Endothelial cell of umbilical vein (primary cell): ENCODE measurements at regions of chr3 and their contacts with region 1.

Region 1: DNA sequence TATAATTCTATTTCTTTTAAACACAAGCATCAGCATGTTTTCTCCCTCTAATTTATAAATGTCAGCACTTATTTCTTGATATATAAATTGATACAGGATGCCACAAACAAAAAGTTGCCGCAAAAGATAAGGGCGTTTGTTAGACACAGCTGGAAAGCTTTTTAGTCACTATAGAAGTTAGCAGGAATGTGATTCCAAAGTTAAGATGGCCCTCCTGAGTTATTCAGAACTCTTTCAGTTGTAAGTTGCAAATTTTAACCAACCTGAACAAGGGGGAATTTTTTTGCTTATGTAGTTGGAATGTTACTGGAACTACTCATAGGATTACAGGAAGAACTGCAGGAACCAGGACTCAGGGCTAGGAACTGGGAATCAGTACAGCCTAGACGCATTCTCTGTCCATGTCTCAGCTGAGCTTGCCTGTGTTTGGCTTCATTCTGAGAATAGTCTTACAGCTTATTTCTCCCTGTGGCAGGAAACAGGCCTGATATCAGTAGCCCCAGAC is 166.3 kb downstream of the VGLL4 start:
- DNase-seq: peak; percentile 95
- H3K4me3 ChIP-seq: peak overlapping the region; percentile 10 to 82 (median 39)
- H3K27ac ChIP-seq: peak overlapping the region; percentile 100
- H3K4me1 ChIP-seq: peaks cover 47% of the 10 kb centered on the region
- H3K27me3 ChIP-seq: no peaks in the 10 kb centered on the region
- CTCF ChIP-seq: no peak
- POLR2A ChIP-seq: peak; percentile 81

Region 2: DNA sequence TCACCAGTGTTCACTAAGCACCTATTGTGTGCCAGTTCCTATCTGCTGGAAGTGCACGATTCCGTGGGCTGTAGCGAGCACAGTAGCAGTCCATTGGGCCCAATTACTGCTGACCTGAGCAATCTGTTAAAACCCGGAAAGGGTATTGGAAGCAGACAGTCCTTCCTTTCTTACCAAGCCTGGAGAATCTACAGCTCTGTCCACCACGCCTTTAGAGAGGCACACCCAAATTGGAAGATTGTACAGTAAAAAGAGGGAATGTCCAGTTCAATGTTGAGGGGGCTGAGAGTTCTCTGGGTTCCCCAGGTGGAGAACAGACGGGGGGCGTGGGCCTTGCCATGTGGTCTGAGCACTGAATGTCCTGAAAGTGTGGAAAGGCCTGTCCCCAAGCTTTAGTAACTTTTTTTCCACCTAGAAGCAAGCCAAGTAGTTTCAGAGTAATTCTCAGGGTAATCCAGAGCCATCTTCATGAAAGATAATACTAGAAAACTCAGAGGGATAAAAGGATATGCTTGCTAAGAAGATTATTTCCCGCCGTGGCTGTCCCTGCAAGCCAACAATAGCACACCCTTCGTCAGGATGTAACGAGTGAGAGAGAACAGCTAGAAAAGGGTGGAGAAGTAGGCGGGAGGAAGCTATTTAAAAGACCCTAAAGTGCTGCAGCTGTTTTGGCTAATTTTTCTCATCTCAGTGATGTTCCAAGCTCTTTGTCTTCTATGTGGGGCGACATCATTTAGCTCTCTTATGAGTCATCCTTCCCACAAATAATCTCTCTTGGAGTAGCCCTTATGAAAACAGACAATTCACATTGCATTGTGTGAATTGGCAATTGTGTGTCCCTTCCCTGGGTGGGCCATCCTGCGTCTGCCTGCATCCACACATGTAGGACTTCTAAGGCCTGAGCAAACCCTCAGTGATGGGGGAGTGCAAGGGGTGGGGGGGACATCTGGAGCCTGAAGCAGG is 24.3 kb before region 1 on chr3:
- CTCF ChIA-PET with region 1: no interaction called
- POLR2A ChIA-PET with region 1: interaction called, 3 read pairs
- dilution Hi-C with region 1: no loop called
- intact Hi-C with region 1: loop called (anchors 1 kb)
- DNase-seq: peak; percentile 85
- H3K4me3 ChIP-seq: no peak overlapping the region
- H3K27ac ChIP-seq: peak overlapping the region; percentile 48
- H3K4me1 ChIP-seq: peaks cover 15% of the 10 kb centered on the region
- H3K27me3 ChIP-seq: no peaks in the 10 kb centered on the region
- CTCF ChIP-seq: no peak
- POLR2A ChIP-seq: no peak

Region 3: DNA sequence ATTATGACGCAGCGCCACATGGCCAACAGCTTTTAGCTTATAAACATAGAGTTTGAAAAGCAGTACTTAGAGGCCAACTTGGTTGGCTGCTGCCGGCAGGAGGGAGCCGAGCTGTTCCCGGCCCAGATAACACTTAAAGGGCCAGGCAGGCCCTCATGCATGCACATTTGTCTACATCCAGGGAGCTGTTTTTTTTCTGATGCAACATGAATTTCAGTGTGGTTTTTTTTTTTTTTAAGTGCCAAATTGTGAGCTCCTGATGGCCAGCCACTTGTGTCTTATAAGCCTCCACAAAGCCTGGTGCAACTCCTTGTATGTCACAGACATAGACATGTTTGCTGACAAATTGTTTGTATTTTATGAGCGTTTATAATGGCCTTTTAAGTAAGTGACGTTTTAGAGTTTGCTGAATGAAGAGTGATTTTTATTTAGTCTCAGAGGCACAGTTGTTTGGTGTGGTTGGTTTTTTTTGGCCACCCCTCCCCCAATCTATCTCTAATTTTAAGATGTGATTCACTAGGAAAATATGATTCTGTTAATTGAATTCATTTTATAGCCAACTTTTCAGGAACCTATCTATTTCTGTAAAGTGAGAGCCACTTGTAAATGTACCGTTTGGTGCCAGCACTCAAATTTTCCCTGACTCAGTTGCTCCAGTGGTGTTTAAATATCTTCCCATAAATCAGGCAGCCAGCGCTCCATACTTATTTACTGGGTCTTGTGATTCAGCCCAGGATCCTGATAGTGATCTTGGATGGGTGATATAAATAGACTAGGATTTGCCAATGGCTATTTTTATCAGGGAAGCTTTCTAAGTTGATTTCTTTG is 31.9 kb after region 1 on chr3:
- CTCF ChIA-PET with region 1: interaction called, 5 read pairs
- POLR2A ChIA-PET with region 1: no interaction called
- dilution Hi-C with region 1: no loop called
- intact Hi-C with region 1: loop called (anchors 1 kb)
- DNase-seq: peak; percentile 89
- H3K4me3 ChIP-seq: no peak overlapping the region
- H3K27ac ChIP-seq: peak overlapping the region; percentile 87
- H3K4me1 ChIP-seq: peaks cover 36% of the 10 kb centered on the region
- H3K27me3 ChIP-seq: no peaks in the 10 kb centered on the region
- CTCF ChIP-seq: no peak
- POLR2A ChIP-seq: no peak

Region 4: GRCh38 chr3:11548721-11549131 is 71.3 kb after region 1 on chr3:
- CTCF ChIA-PET with region 1: no interaction called
- POLR2A ChIA-PET with region 1: no interaction called
- dilution Hi-C with region 1: no loop called
- intact Hi-C with region 1: loop called (anchors 2 kb)
- DNase-seq: peak; percentile 85
- H3K4me3 ChIP-seq: no peak overlapping the region
- H3K27ac ChIP-seq: peak overlapping the region; percentile 39
- H3K4me1 ChIP-seq: peaks cover 16% of the 10 kb centered on the region
- H3K27me3 ChIP-seq: no peaks in the 10 kb centered on the region
- CTCF ChIP-seq: no peak
- POLR2A ChIP-seq: no peak

Region 5: DNA sequence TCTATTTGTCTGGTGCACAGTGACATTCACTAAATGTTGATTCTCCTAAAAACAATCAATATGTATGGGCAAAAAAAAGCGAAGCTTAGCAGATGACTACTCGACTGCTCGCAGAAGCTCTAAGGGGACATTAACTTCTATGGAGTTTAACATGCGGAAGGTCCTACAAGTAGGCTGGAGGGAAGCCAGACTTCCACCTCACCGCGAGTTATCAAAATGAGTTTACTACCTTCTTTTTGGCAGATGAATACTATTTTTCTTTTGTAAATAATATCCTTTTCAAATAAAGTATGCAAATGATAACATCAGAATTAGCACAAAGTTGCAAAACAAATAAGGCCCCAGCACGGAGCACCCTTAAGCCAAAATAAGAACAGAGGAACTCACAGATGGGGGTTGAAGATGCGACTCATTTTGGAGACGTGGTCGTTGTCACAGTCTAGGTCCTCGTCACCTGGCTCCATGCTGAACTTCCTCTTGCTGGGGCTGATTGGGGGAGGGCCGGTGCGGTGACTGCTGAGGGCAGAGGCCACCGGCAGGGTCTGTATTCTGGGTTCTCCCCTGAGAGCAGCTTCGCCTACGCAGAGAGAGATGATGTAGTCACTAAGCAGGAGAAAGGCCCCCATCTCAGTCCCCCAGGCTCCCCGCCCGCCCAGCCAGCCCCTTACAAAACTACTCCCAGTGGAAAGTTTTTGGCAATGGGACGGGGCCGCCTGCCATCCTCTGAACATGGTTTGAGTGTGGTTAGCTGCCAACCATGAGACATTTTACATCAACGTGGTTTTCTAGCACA is 124.2 kb after region 1 on chr3:
- CTCF ChIA-PET with region 1: no interaction called
- POLR2A ChIA-PET with region 1: interaction called, 4 read pairs
- dilution Hi-C with region 1: no loop called
- intact Hi-C with region 1: loop called (anchors 1 kb)
- DNase-seq: no peak
- H3K4me3 ChIP-seq: no peak overlapping the region
- H3K27ac ChIP-seq: peak overlapping the region; percentile 64
- H3K4me1 ChIP-seq: peaks cover 23% of the 10 kb centered on the region
- H3K27me3 ChIP-seq: no peaks in the 10 kb centered on the region
- CTCF ChIP-seq: no peak
- POLR2A ChIP-seq: no peak

Region 6: DNA sequence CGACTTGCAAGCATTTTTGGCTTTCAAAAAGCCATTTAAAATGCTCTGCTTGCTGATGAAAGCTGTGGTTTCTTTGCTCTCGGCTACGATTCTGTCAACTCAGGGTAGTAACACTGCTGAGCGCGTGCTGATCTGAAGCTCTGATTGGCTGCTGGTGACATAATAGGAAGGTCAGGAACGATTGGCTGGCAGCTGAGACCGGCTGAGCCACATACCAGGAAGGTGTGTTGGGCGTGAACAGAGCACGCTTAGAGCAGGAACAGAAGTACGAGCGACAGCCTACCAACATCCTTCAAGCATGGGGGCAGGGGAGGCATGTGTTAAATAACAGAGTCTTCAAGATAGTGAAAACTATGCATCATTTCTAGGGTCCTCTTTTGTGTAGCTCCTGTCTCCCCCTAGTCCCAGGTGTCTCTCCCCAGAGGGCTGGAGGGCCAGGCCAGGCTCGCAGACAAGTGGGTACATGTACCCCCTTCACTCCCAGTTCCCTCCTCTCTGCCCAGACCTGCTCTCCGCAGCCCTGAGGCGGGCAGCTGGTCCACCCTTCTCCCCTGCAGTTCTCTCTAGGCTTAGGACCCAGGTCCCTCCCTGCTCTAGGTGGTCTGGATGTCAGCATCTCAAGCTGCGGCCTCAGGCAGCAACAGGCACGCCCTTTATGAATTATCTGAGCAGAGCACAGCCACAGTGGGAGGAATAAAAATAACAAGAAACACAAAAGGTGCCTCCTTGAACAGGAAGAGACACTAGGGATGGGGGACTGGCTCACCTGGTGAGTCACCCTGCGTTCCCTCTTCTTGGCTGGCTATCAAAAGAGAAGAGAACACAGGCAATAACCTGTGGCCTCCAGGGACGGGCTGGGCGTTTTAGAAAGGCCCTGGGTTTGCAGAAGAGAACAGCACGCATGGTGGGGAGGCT is 293.3 kb after region 1 on chr3:
- CTCF ChIA-PET with region 1: no interaction called
- POLR2A ChIA-PET with region 1: no interaction called
- dilution Hi-C with region 1: no loop called
- intact Hi-C with region 1: no loop called
- DNase-seq: peak; percentile 85
- H3K4me3 ChIP-seq: no peak overlapping the region
- H3K27ac ChIP-seq: no peak overlapping the region
- H3K4me1 ChIP-seq: peaks cover 11% of the 10 kb centered on the region
- H3K27me3 ChIP-seq: no peaks in the 10 kb centered on the region
- CTCF ChIP-seq: no peak
- POLR2A ChIP-seq: no peak